Common myeloid progenitor, CD34-positive (primary cell): ENCODE measurements at regions of chr2 and their contacts with region 1.

Region 1: GRCh38 chr2:219142329-219142728 is 18.3 kb downstream of the NHEJ1 start:
- DNase-seq: no peak
- H3K4me3 ChIP-seq: no peak overlapping the region
- H3K27ac ChIP-seq: no peak overlapping the region
- H3K4me1 ChIP-seq: no peaks in the 10 kb centered on the region
- H3K27me3 ChIP-seq: no peaks in the 10 kb centered on the region

Region 2: DNA sequence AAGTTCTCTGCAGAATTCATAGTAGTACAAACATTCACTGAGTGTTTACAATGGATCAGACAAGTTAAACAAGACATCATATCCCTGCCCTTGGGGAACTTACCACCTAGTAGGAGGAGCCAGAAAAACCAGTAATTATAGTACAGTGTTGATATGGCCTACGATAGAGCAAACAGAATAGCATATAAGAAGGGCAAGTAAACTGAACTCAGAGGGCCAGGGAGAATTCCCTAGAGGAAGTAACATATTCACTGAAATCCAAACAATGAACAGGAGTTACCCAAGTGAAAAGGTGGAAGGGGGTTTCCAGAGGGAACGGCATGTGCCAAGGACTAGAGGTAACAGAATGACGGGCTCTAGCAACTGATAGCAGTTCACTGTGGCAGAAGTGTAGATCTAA is 15.8 kb before region 1 on chr2:
- CTCF ChIA-PET with region 1: interaction called, 10 read pairs
- POLR2A ChIA-PET with region 1: no interaction called
- DNase-seq: no peak
- H3K4me3 ChIP-seq: no peak overlapping the region
- H3K27ac ChIP-seq: no peak overlapping the region
- H3K4me1 ChIP-seq: peaks cover 0 to 24% (median 7%) of the 10 kb centered on the region in 4 experiments
- H3K27me3 ChIP-seq: no peaks in the 10 kb centered on the region